Sigmoid colon (tissue), 7 donors: ENCODE measurements at regions of chr3 and their contacts with region 1.

Region 1: DNA sequence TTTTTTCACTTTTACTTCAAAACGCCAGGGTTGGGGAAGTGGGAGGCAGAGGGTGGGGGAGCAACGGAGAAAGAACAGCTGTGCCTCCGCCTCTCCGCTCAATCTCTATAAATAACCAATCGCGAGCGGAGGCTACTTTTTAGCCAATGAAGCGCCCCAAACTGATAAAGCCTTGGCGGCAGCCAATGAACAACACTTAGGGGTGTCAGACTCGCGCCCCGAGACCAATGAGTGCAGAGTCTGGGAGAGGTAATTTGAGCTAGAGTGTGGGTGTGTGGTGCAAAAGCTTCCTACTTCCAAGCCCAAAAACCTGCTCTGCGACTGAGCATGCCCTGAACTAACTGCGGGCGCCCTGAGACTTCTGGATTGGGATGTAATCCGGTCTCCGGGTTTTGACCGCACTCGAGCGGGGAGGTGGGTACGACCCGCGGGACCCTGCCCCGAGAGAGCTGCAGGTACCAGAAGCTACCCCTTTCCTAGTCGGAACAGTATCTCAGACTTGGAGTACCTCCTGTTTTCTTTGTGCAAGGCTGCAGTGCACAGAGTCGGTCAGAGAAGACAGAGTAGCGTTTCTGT is 800 bp upstream of the RAP2B start:
- DNase-seq: peak; percentile 98
- H3K4me3 ChIP-seq: peak overlapping the region; percentile 62 to 90 (median 79)
- H3K27ac ChIP-seq: peak overlapping the region; percentile 91 to 98 (median 95)
- H3K4me1 ChIP-seq: peaks cover 3 to 32% (median 25%) of the 10 kb centered on the region in 4 donors
- H3K27me3 ChIP-seq: no peaks in the 10 kb centered on the region
- CTCF ChIP-seq: no peak
- EP300 ChIP-seq: no peak
- POLR2A ChIP-seq: peak; percentile 43 to 63

Region 2: GRCh38 chr3:152879130-152879789 is 282.0 kb before region 1 on chr3:
- intact Hi-C with region 1: no loop called
- DNase-seq: no peak
- H3K4me3 ChIP-seq: no peak overlapping the region
- H3K27ac ChIP-seq: no peak overlapping the region
- H3K4me1 ChIP-seq: no peaks in the 10 kb centered on the region
- H3K27me3 ChIP-seq: no peaks in the 10 kb centered on the region
- CTCF ChIP-seq: no peak
- EP300 ChIP-seq: no peak
- POLR2A ChIP-seq: no peak

Region 3: DNA sequence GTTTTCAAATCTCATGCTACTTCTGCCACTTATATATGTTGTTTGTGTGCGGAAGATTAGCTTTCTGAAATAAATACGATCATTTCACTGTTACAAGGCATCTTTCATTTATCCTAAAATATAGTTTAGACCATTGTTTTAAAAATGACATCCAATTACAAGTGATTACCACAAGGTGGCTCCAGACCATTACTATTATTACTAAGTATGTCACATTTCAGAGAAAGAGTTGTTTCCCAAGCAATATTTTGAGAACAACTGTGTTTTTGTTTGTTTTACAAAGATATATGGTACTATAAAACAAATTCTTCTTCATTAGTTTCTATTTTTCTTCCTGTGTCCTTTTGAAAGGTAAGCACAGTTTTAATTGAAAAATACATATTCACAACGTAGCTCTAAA is 135.2 kb before region 1 on chr3:
- intact Hi-C with region 1: no loop called
- DNase-seq: no peak
- H3K4me3 ChIP-seq: no peak overlapping the region
- H3K27ac ChIP-seq: no peak overlapping the region
- H3K4me1 ChIP-seq: peaks cover 0 to 19% (median 16%) of the 10 kb centered on the region in 4 donors
- H3K27me3 ChIP-seq: no peaks in the 10 kb centered on the region
- CTCF ChIP-seq: peak in 3 of 4 experiments; percentile 44 to 46 (median 45)
- EP300 ChIP-seq: no peak
- POLR2A ChIP-seq: no peak

Region 4: DNA sequence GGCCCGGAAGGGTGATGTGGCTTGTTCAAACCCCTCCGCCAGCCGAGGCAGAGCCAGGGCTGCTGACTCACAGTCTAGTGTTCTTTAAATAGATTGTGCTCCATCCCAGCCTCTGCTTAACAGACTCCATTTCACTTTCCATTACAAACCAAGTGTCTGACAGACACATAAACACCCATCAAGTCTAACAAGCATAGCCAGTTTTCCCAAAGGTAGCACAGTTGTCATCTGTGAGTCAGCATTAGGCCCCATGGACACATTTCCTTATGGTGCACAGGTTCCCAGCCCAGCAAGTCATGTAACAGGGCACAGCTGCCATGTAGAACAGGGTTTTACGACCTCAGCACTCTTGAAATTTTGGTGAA is 109.1 kb before region 1 on chr3:
- intact Hi-C with region 1: loop called (anchors 2 kb)
- DNase-seq: peak; percentile 82
- H3K4me3 ChIP-seq: no peak overlapping the region
- H3K27ac ChIP-seq: peak overlapping the region; percentile 56 to 74 (median 68)
- H3K4me1 ChIP-seq: peaks cover 0 to 15% (median 13%) of the 10 kb centered on the region in 4 donors
- H3K27me3 ChIP-seq: no peaks in the 10 kb centered on the region
- CTCF ChIP-seq: no peak
- EP300 ChIP-seq: peak in 1 of 4 donors; percentile 38
- POLR2A ChIP-seq: no peak

Region 5: GRCh38 chr3:153291056-153291685 is 129.9 kb after region 1 on chr3:
- intact Hi-C with region 1: loop called (anchors 5 kb)
- DNase-seq: no peak
- H3K4me3 ChIP-seq: no peak overlapping the region
- H3K27ac ChIP-seq: no peak overlapping the region
- H3K4me1 ChIP-seq: no peaks in the 10 kb centered on the region
- H3K27me3 ChIP-seq: no peaks in the 10 kb centered on the region
- CTCF ChIP-seq: peak in 1 of 4 experiments; percentile 31
- EP300 ChIP-seq: no peak
- POLR2A ChIP-seq: no peak

Region 6: GRCh38 chr3:153768561-153769469 is 607.6 kb after region 1 on chr3:
- intact Hi-C with region 1: loop called (anchors 5 kb)
- DNase-seq: peak; percentile 60
- H3K4me3 ChIP-seq: no peak overlapping the region
- H3K27ac ChIP-seq: no peak overlapping the region
- H3K4me1 ChIP-seq: no peaks in the 10 kb centered on the region
- H3K27me3 ChIP-seq: no peaks in the 10 kb centered on the region
- CTCF ChIP-seq: peak; percentile 35 to 80 (median 76)
- EP300 ChIP-seq: no peak
- POLR2A ChIP-seq: no peak